ENCODE measurements at regions of chr2 and their contacts with region 1.

Region 1: DNA sequence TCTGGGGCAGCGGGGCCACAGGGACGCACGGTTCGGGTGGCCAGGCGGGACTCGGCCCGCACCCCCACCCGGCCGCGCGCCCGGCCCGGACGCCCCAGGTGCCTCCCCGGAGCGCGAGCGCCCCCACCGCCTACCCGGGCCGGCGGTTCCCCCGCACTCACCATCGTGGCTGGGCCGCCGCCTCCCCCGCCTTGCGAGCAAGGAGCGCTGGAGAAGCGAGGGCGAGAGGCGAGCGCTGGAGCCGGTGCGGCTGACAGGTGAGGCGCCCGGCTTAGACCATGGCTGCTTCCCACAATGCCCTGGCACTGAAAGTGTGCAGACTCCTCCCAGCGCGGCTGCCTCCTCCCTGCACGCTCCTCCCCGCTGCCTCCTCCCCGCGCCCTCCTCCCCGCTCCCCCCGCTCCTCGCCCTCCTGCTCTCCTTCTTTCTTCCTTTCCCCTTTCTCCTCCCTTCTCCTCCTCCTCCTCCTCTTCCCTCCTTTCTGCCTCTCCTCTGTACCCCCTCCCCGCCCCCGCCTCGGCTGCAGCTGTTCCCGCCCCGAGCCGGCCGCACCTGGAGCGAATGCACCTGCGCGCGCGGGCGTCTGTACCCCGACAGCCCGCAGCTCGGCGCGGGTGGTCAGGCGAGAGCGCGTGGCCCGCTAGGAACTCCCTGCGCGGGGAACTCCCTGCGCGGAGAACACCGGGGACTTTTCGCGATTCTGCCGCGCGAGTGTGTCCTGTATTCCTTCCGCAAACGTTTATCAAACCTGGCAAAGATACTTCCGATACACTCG is at the start of gene AP1S3:
- DNase-seq: peak; percentile 88
- H3K4me3 ChIP-seq: peak within 1 kb of the TSS; percentile 83
- H3K27ac ChIP-seq: peak within 1 kb of the TSS; percentile 73
- H3K4me1 ChIP-seq: peaks cover 51% of the 10 kb centered on the region
- CTCF ChIP-seq: peak; percentile 50
- total RNA-seq, gene AP1S3: 7.0 and 11.2 TPM in 2 replicates

Region 2: GRCh38 chr2:223727562-223727961 is 109.9 kb before region 1 on chr2:
- CTCF ChIA-PET with region 1: no interaction called
- POLR2A ChIA-PET with region 1: no interaction called
- intact Hi-C with region 1: loop called (anchors 1 kb)
- DNase-seq: peak; percentile 81
- H3K4me3 ChIP-seq: no peak overlapping the region
- H3K27ac ChIP-seq: no peak overlapping the region
- H3K4me1 ChIP-seq: peaks cover 3% of the 10 kb centered on the region
- CTCF ChIP-seq: peak; percentile 88

Region 3: GRCh38 chr2:223797811-223798721 is 39.4 kb before region 1 on chr2:
- CTCF ChIA-PET with region 1: interaction called, 4 read pairs
- POLR2A ChIA-PET with region 1: interaction called, 11 read pairs
- intact Hi-C with region 1: loop called (anchors 2 kb)
- DNase-seq: peak; percentile 83
- H3K4me3 ChIP-seq: peak overlapping the region; percentile 22
- H3K27ac ChIP-seq: peak overlapping the region; percentile 22
- H3K4me1 ChIP-seq: peaks cover 44% of the 10 kb centered on the region
- CTCF ChIP-seq: peak; percentile 72

Region 4: GRCh38 chr2:223896833-223897311 is 59.4 kb after region 1 on chr2:
- CTCF ChIA-PET with region 1: interaction called, 3 read pairs
- POLR2A ChIA-PET with region 1: interaction called, 5 read pairs
- intact Hi-C with region 1: loop called (anchors 1 kb)
- DNase-seq: peak; percentile 63
- H3K4me3 ChIP-seq: peak overlapping the region; percentile 54
- H3K27ac ChIP-seq: peak overlapping the region; percentile 63
- H3K4me1 ChIP-seq: peaks cover 52% of the 10 kb centered on the region
- CTCF ChIP-seq: no peak

Region 5: GRCh38 chr2:223957092-223957851 is 119.8 kb after region 1 on chr2 and contains the start of gene MRPL44:
- CTCF ChIA-PET with region 1: no interaction called
- POLR2A ChIA-PET with region 1: no interaction called
- intact Hi-C with region 1: no loop called
- DNase-seq: peak; percentile 96
- H3K4me3 ChIP-seq: peak within 1 kb of the TSS; percentile 91
- H3K27ac ChIP-seq: peak within 1 kb of the TSS; percentile 29
- H3K4me1 ChIP-seq: peaks cover 82% of the 10 kb centered on the region
- CTCF ChIP-seq: no peak
- total RNA-seq, gene MRPL44: 25.4 and 36.2 TPM in 2 replicates

Region 6: GRCh38 chr2:223993621-223994232 is 156.3 kb after region 1 on chr2:
- CTCF ChIA-PET with region 1: no interaction called
- POLR2A ChIA-PET with region 1: no interaction called
- intact Hi-C with region 1: no loop called
- DNase-seq: peak; percentile 74
- H3K4me3 ChIP-seq: no peak overlapping the region
- H3K27ac ChIP-seq: no peak overlapping the region
- H3K4me1 ChIP-seq: no peaks in the 10 kb centered on the region
- CTCF ChIP-seq: peak; percentile 93